Spleen (tissue), 13 donors: ENCODE measurements at regions of chr12 and their contacts with region 1.

Region 1: DNA sequence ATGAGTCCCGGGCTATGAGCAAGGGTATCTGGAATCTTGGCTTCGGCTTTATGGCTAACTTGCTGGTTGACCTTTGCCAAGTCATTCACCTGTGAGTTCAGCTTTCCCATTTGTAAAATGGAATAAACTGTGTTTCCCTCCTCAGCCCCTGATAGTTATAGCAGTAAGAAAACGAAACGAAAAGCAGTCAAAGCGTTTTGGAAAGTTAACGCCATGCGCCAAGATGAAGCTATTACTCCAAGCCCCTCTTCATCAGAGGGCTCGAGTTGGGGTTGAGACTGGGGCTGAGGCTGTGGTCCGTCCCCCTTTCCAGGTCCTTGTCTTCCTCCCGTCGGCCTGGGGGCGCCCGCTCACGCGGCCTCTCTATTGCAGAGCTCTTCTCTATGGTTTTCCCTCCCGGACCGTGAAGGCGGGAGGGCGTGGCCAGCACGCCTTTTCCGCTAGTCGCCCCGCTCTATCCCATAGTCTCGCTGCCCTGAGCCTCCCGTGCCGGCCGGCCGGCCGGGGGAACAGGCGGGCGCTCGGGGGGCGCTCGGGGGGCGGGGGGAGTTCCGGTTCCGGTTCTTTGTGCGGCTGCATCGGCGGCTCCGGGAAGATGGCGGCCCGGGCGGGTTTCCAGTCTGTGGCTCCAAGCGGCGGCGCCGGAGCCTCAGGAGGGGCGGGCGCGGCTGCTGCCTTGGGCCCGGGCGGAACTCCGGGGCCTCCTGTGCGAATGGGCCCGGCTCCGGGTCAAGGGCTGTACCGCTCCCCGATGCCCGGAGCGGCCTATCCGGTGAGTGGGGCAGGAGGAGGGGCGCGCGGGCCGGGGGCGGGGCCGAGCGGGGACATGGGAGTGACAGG is at the start of gene SMARCD1:
- DNase-seq: peak; percentile 99
- H3K4me3 ChIP-seq: peak within 1 kb of the TSS; percentile 71 to 97 (median 84)
- H3K27ac ChIP-seq: peak within 1 kb of the TSS; percentile 90 to 99 (median 97)
- H3K4me1 ChIP-seq: peaks cover 7 to 59% (median 43%) of the 10 kb centered on the region in 6 donors
- H3K27me3 ChIP-seq: peaks cover 0 to 3% (median 0%) of the 10 kb centered on the region in 7 donors
- CTCF ChIP-seq: peak in 5 of 11 experiments; percentile 6 to 56 (median 41)
- POLR2A ChIP-seq: no peak
- total RNA-seq, gene SMARCD1: 47.3 to 85.7 (median 60.3) TPM

Region 2: DNA sequence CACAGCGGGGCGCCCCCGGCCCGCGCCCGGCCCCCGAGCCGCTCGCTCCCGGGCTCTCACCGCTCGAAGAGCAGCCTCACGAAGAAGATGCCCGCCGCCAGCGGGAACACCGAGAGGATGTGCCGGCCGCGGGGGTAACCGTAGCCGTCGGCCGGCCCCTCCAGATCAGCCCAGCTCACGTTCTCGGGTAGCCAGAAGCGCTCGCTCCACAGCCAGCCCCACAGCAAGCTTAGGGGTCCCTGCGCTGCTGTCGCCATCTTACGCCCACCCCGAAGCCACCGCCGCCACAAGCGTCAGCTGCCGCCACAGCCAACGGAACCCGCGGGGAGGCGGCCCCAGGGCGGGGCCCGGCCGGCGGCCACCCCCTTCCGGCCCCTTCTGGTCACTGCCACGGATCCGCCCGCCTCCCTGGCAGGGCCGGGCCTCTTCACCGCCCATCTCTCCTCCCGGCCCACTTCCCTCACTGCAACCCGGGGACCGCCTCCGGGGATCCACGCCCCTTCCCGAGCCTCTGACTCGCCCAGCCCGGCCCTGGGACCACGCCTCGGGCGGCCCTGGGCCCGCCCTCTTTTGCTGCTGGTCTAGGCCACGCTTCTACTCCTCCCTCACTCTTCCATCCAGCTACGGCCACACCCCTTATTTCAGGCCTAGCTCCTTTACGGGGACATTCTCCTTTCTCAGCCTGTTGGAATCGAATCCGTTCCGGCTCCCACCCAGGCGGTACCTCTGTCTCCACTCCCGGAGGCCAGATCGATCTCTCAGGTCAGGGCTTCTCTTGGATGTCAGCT is 82.2 kb after region 1 on chr12 and contains the start of gene CERS5:
- intact Hi-C with region 1: loop called (anchors 5 kb)
- DNase-seq: peak; percentile 100
- H3K4me3 ChIP-seq: peak within 1 kb of the TSS; percentile 84 to 97 (median 89)
- H3K27ac ChIP-seq: peak within 1 kb of the TSS; percentile 88 to 96 (median 94)
- H3K4me1 ChIP-seq: peaks cover 10 to 51% (median 30%) of the 10 kb centered on the region in 6 donors
- H3K27me3 ChIP-seq: no peaks in the 10 kb centered on the region
- CTCF ChIP-seq: peak in 9 of 11 experiments; percentile 27 to 79 (median 62)
- POLR2A ChIP-seq: no peak
- total RNA-seq, gene CERS5: 21.8 to 55.9 (median 41.3) TPM